SK-N-SH (cell line): ENCODE measurements at regions of chr6 and their contacts with region 1.

Region 1: GRCh38 chr6:41787219-41787917 is at the start of gene TOMM6:
- DNase-seq: peak; percentile 91
- H3K4me3 ChIP-seq: peak within 1 kb of the TSS; percentile 66 to 100
- H3K27ac ChIP-seq: peak within 1 kb of the TSS; percentile 90 to 93
- H3K4me1 ChIP-seq: peaks cover 9 to 17% of the 10 kb centered on the region in 2 experiments; a peak in 2 of 4 replicates
- H3K27me3 ChIP-seq: no peaks in the 10 kb centered on the region
- CTCF ChIP-seq: peak; percentile 70
- EP300 ChIP-seq: no peak
- RAD21 ChIP-seq: peak; percentile 13; the same call in 1 of the 2 replicates
- polyA plus RNA-seq, gene TOMM6: 493 and 565 TPM in 2 replicates

Region 2: GRCh38 chr6:41560431-41561192 is 226.8 kb before region 1 on chr6:
- CTCF ChIA-PET with region 1: no interaction called
- POLR2A ChIA-PET with region 1: no interaction called
- DNase-seq: no peak
- H3K4me3 ChIP-seq: no peak overlapping the region
- H3K27ac ChIP-seq: no peak overlapping the region
- H3K4me1 ChIP-seq: peaks cover 4 to 9% of the 10 kb centered on the region in 2 experiments; a peak in 2 of 4 replicates
- H3K27me3 ChIP-seq: no peaks in the 10 kb centered on the region
- CTCF ChIP-seq: no peak
- EP300 ChIP-seq: no peak
- RAD21 ChIP-seq: no peak

Region 3: GRCh38 chr6:41705996-41706835 is 81.2 kb before region 1 on chr6:
- CTCF ChIA-PET with region 1: interaction called, 22 read pairs
- POLR2A ChIA-PET with region 1: no interaction called
- DNase-seq: peak; percentile 80
- H3K4me3 ChIP-seq: peak overlapping the region in 1 of 2 experiments; percentile 13; a peak in 1 of 4 replicates
- H3K27ac ChIP-seq: peak overlapping the region; percentile 56 to 83; a peak in 3 of 4 replicates
- H3K4me1 ChIP-seq: peaks cover 17 to 31% of the 10 kb centered on the region in 2 experiments; a peak in 3 of 4 replicates
- H3K27me3 ChIP-seq: no peaks in the 10 kb centered on the region
- CTCF ChIP-seq: peak; percentile 86
- EP300 ChIP-seq: no peak
- RAD21 ChIP-seq: peak; percentile 54

Region 4: GRCh38 chr6:41735427-41736356 is 51.7 kb before region 1 on chr6 and contains the start of gene TFEB:
- CTCF ChIA-PET with region 1: interaction called, 53 read pairs
- POLR2A ChIA-PET with region 1: interaction called, 23 read pairs
- DNase-seq: peak; percentile 96
- H3K4me3 ChIP-seq: peak within 1 kb of the TSS; percentile 71 to 72
- H3K27ac ChIP-seq: peak within 1 kb of the TSS; percentile 81 to 96; a peak in 3 of 4 replicates
- H3K4me1 ChIP-seq: peaks cover 23 to 31% of the 10 kb centered on the region in 2 experiments
- H3K27me3 ChIP-seq: no peaks in the 10 kb centered on the region
- CTCF ChIP-seq: peak; percentile 74
- EP300 ChIP-seq: peak in 1 of 2 experiments; percentile 16; a peak in 1 of 4 replicates
- RAD21 ChIP-seq: peak; percentile 63
- polyA plus RNA-seq, gene TFEB: 6.2 and 6.7 TPM in 2 replicates

Region 5: DNA sequence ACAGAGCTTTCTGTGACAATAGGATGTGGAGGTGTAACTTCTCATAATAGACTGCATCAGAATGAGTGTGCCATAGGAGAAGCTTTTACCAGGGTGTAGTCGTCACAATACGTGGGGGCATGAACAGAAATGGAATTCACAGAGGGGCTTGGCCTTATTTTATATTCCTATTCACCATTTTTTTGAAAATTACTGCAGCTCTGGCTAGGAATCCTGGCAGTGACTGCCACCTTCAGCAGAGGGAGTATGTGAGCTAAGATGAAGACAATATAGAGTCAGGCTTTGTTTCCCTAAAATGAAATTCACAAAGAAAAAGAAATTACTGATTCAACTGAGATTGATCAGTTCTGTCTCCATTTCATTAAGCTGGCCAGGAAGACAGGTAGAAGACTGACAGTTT is 14.0 kb after region 1 on chr6:
- CTCF ChIA-PET with region 1: interaction called, 41 read pairs
- POLR2A ChIA-PET with region 1: interaction called, 3 read pairs
- DNase-seq: no peak
- H3K4me3 ChIP-seq: no peak overlapping the region
- H3K27ac ChIP-seq: no peak overlapping the region
- H3K4me1 ChIP-seq: no peaks in the 10 kb centered on the region
- H3K27me3 ChIP-seq: no peaks in the 10 kb centered on the region
- CTCF ChIP-seq: peak; percentile 76
- EP300 ChIP-seq: no peak
- RAD21 ChIP-seq: peak; percentile 61

Region 6: DNA sequence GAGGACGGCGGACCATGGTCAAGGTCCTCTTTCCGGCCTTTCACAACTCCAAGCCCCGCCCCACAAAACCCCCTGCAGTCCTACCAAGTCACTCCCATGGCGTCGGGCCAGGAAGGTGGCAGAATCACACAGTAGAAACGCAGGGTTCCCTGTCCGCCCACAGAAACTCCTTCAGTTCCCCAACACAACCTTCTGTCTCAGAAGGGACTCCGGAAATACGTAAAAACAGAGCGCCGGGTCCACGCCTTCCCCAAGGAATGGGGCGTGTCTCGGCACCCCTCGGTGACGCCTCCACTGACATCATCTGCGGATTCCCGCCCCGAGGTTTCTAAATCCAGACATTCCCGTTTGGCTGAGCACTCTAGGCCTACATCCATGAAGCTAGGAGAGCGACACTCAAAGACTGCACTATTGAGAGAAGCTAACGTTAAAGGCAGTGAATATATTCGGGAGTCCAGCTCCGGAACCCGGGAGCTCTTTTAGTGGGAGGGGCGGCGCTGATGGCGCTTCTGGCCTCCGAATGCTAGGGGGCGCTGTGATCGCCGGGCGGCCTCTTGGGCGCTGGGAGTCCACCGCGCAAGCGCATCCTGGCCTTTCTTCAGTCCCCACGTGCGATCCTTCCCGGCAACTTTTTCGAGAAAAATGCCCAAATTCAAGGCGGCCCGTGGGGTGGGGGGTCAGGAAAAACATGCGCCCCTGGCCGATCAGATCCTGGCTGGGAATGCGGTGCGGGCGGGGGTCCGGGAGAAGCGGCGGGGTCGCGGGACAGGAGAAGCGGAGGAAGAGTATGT is 133.7 kb after region 1 on chr6 and contains the starts of genes BYSL and MED20:
- CTCF ChIA-PET with region 1: interaction called, 56 read pairs
- POLR2A ChIA-PET with region 1: interaction called, 14 read pairs
- DNase-seq: peak; percentile 95
- H3K4me3 ChIP-seq: peak within 1 kb of the TSS; percentile 55 to 99
- H3K27ac ChIP-seq: peak within 1 kb of the TSS; percentile 96 to 99
- H3K4me1 ChIP-seq: peaks cover 14 to 18% of the 10 kb centered on the region in 2 experiments; a peak in 3 of 4 replicates
- H3K27me3 ChIP-seq: no peaks in the 10 kb centered on the region
- CTCF ChIP-seq: peak; percentile 97
- EP300 ChIP-seq: no peak
- RAD21 ChIP-seq: no peak; the same call in 1 of the 2 replicates
- polyA plus RNA-seq, gene BYSL: 31.1 and 56.0 TPM in 2 replicates
- polyA plus RNA-seq, gene MED20: 25.1 and 29.6 TPM in 2 replicates

Region 7: DNA sequence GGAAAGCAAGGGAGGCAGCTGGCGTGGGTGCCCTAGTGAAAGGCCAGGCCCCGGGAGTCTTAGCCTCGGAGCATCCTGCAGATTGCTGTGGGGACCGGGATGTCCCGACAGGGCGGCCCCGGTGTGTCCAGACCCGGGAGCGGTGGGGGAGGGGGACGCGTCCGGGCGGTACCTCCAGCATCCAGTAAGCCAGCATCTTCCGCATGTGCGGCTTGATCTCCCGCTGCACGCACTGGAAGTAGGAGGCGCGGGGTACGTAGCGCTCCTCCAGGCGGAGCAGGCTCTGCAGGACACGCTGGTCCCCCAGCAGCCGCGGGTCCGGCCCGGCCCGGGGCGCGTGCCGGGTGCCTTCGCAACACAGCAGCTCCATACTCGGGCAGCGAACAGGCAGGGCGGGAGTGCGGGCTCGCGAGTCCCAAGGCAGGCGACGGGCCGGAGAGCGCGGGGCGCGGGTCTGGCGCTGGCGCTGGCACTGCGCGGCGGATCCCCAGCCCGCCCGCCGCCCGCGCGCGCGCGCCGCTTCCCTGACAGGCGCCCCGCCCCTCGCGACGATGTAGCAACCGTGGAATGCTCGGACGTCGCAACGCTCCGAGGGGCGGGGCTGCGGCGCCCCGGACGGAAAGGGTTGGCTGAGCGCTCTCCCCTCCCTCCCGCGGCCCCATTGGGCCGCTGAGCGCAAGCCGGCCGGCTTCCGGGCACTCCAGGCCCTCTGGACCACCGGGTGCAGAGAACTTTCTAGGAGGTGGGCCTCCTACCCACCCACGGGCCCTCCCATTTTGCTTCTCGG is 154.1 kb after region 1 on chr6 and contains the start of gene CCND3:
- CTCF ChIA-PET with region 1: interaction called, 25 read pairs
- POLR2A ChIA-PET with region 1: no interaction called
- DNase-seq: peak; percentile 95
- H3K4me3 ChIP-seq: peak within 1 kb of the TSS; percentile 92 to 95
- H3K27ac ChIP-seq: peak within 1 kb of the TSS; percentile 69 to 78
- H3K4me1 ChIP-seq: peaks cover 18 to 23% of the 10 kb centered on the region in 2 experiments; a peak in 3 of 4 replicates
- H3K27me3 ChIP-seq: no peaks in the 10 kb centered on the region
- CTCF ChIP-seq: no peak
- EP300 ChIP-seq: no peak
- RAD21 ChIP-seq: no peak
- polyA plus RNA-seq, gene CCND3: 22.4 and 26.6 TPM in 2 replicates